Ovary (tissue), 10 donors: ENCODE measurements at regions of chr4 and their contacts with region 1.

Region 1: DNA sequence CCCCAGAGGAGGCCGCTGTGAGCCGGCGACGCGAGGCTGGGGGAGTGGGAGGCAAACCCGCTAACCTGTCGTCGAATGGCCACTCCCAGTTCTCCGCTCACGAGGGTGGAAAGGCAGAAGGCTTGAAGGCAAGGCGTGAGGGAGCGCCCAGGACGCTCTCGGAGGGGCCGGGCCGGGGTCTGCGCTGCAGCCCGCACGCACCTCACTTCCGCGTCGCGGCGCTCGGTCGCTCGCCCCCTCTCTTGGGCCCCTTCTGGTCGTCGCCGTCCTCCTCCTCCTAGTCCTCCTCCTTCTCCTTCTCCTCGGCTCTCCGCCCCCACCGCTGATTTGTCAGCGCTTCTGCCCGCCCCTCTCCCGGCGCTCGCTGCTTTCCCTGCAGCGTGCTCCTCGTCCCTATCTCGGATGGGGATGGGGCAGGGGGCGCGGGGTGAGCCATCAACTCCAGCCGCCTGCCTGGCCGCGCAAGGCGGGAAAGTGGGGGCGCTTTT is at the start of gene SNCA:
- DNase-seq: peak; percentile 80 to 85 (median 83)
- H3K4me3 ChIP-seq: peak within 1 kb of the TSS; percentile 79
- H3K27ac ChIP-seq: peak within 1 kb of the TSS; percentile 3 to 64
- H3K4me1 ChIP-seq: peaks cover 3% of the 10 kb centered on the region
- H3K27me3 ChIP-seq: no peaks in the 10 kb centered on the region
- CTCF ChIP-seq: no peak
- EP300 ChIP-seq: no peak
- POLR2A ChIP-seq: no peak
- total RNA-seq, gene SNCA: 7.6 to 31.4 (median 23.1) TPM

Region 2: GRCh38 chr4:89737888-89738287 is 99.1 kb before region 1 on chr4:
- intact Hi-C with region 1: no loop called
- DNase-seq: no peak
- H3K4me3 ChIP-seq: no peak overlapping the region
- H3K27ac ChIP-seq: no peak overlapping the region
- H3K4me1 ChIP-seq: no peaks in the 10 kb centered on the region
- H3K27me3 ChIP-seq: no peaks in the 10 kb centered on the region
- CTCF ChIP-seq: no peak
- EP300 ChIP-seq: no peak
- POLR2A ChIP-seq: no peak

Region 3: DNA sequence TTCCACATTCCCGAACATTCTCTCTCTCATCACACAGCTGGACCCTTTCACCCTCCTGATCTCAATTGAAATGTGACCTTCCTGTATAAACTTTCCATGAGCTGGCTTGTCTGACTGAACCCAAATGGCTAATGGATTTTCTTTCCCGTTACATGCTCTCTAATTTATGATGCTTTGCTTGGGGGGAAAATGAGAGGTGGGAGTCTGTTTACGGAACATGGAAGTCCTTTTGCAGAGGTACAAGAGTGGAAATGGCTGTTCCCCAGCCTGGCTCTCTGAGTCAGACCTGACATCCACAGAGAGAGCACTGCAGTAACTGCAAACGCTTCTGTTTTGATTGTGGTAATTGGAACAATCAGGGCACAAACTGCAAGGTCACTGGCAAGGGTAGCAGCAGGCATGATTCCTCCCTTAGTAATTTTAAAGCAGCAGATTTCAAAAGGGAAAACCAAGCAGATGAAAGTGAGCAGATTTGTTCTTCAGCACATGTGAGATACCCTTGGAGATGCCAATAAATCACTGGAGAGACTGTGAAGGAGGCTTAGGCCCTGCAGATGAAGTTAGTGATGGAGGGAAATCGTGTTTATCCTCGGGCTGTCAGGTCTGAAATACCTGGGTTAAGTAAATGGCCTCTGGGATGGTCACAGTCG is 83.9 kb before region 1 on chr4:
- intact Hi-C with region 1: loop called in 1 of 4 experiments (anchors 10 kb)
- DNase-seq: peak in 3 of 5 donors; percentile 23 to 48 (median 47)
- H3K4me3 ChIP-seq: no peak overlapping the region
- H3K27ac ChIP-seq: peak overlapping the region in 1 of 2 donors; percentile 64
- H3K4me1 ChIP-seq: peaks cover 6% of the 10 kb centered on the region
- H3K27me3 ChIP-seq: no peaks in the 10 kb centered on the region
- CTCF ChIP-seq: no peak
- EP300 ChIP-seq: no peak
- POLR2A ChIP-seq: no peak